ENCODE measurements at regions of chr2 and their contacts with region 1.

Region 1: GRCh38 chr2:237674731-237675276 is 47.4 kb downstream of the LRRFIP1 start:
- DNase-seq: peak; percentile 52 to 94 (median 88)
- ATAC-seq: peak; percentile 64 to 76 (median 68)
- H3K4me3 ChIP-seq: peak overlapping the region; percentile 58 to 76
- H3K4me3 Mint-ChIP-seq: peak overlapping the region; percentile 81 to 86 (median 82)
- H3K27ac ChIP-seq: peak overlapping the region; percentile 99
- H3K27ac Mint-ChIP-seq: peak overlapping the region; percentile 93 to 98
- H3K4me1 ChIP-seq: peaks cover 45 to 48% of the 10 kb centered on the region in 2 experiments
- H3K4me1 Mint-ChIP-seq: peaks cover 48 to 66% (median 50%) of the 10 kb centered on the region in 3 donors
- H3K27me3 ChIP-seq: peaks cover 0 to 7% of the 10 kb centered on the region in 2 experiments
- H3K27me3 Mint-ChIP-seq: no peaks in the 10 kb centered on the region

Region 2: GRCh38 chr2:237686659-237687136 is 11.9 kb after region 1 on chr2:
- CTCF ChIA-PET with region 1: interaction called, 3 to 112 read pairs
- POLR2A ChIA-PET with region 1: interaction called, 43 to 152 read pairs
- DNase-seq: no peak
- ATAC-seq: no peak
- H3K4me3 ChIP-seq: no peak overlapping the region
- H3K4me3 Mint-ChIP-seq: peak overlapping the region in 1 of 3 donors; percentile 28
- H3K27ac ChIP-seq: peak overlapping the region; percentile 96
- H3K27ac Mint-ChIP-seq: peak overlapping the region; percentile 99 to 100
- H3K4me1 ChIP-seq: peaks cover 33 to 52% of the 10 kb centered on the region in 2 experiments
- H3K4me1 Mint-ChIP-seq: peaks cover 53 to 60% (median 54%) of the 10 kb centered on the region in 3 donors
- H3K27me3 ChIP-seq: no peaks in the 10 kb centered on the region
- H3K27me3 Mint-ChIP-seq: no peaks in the 10 kb centered on the region

Region 3: GRCh38 chr2:237691908-237692600 is 17.2 kb after region 1 on chr2:
- CTCF ChIA-PET with region 1: interaction called, 9 to 112 read pairs
- POLR2A ChIA-PET with region 1: interaction called, 43 to 152 read pairs
- DNase-seq: peak; percentile 85 to 98 (median 91)
- ATAC-seq: peak; percentile 66 to 77 (median 76)
- H3K4me3 ChIP-seq: peak overlapping the region; percentile 82 to 93
- H3K4me3 Mint-ChIP-seq: peak overlapping the region; percentile 84 to 89 (median 87)
- H3K27ac ChIP-seq: peak overlapping the region; percentile 95
- H3K27ac Mint-ChIP-seq: peak overlapping the region; percentile 93 to 97
- H3K4me1 ChIP-seq: peaks cover 46 to 77% of the 10 kb centered on the region in 2 experiments
- H3K4me1 Mint-ChIP-seq: peaks cover 77 to 82% (median 80%) of the 10 kb centered on the region in 3 donors
- H3K27me3 ChIP-seq: no peaks in the 10 kb centered on the region
- H3K27me3 Mint-ChIP-seq: no peaks in the 10 kb centered on the region

Region 4: DNA sequence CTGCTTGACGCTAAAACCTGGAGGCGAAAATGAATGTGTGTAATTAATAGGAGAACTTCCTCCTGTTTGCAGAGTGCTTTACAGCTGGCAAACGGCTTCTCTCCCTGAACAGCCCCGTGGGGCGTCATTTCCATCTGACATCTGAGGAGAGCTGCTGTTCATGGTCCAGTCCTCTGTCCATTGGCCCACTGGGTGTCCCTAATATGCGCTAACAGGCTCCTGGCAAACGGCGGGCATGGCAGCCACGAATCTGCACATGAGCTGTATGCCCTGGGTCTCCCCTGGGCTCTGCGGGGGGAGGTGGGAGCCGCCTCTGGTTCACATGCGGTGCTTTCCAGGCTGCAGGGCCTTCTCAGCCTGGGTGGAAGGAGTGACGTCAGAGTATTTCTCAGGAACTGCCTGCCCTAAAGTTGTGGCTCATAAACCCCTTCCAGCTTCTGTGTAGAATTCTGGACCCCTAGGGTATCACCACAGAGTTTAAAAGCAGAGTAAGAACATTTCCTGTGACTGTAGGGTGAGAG is 25.8 kb after region 1 on chr2:
- CTCF ChIA-PET with region 1: interaction called, 9 to 112 read pairs
- POLR2A ChIA-PET with region 1: interaction called, 13 to 122 read pairs
- DNase-seq: peak in 31 of 35 experiments; percentile 59 to 87 (median 72)
- ATAC-seq: peak; percentile 18 to 81 (median 36)
- H3K4me3 ChIP-seq: peak overlapping the region in 1 of 2 donors; percentile 25
- H3K4me3 Mint-ChIP-seq: peak overlapping the region; percentile 44 to 77 (median 59)
- H3K27ac ChIP-seq: peak overlapping the region; percentile 82
- H3K27ac Mint-ChIP-seq: peak overlapping the region; percentile 89 to 96
- H3K4me1 ChIP-seq: peaks cover 74 to 96% of the 10 kb centered on the region in 2 experiments
- H3K4me1 Mint-ChIP-seq: peaks cover 96 to 98% (median 96%) of the 10 kb centered on the region in 3 donors
- H3K27me3 ChIP-seq: no peaks in the 10 kb centered on the region
- H3K27me3 Mint-ChIP-seq: no peaks in the 10 kb centered on the region

Region 5: GRCh38 chr2:237708065-237708398 is 33.2 kb after region 1 on chr2:
- CTCF ChIA-PET with region 1: interaction called, 5 to 17 read pairs
- POLR2A ChIA-PET with region 1: interaction called, 4 to 6 read pairs
- DNase-seq: peak in 1 of 35 experiments; percentile 42
- ATAC-seq: no peak
- H3K4me3 ChIP-seq: no peak overlapping the region
- H3K4me3 Mint-ChIP-seq: peak overlapping the region in 1 of 3 donors; percentile 39
- H3K27ac ChIP-seq: peak overlapping the region; percentile 6
- H3K27ac Mint-ChIP-seq: peak overlapping the region in 1 of 2 donors; percentile 25
- H3K4me1 ChIP-seq: peaks cover 13 to 63% of the 10 kb centered on the region in 2 experiments
- H3K4me1 Mint-ChIP-seq: peaks cover 69 to 77% (median 75%) of the 10 kb centered on the region in 3 donors
- H3K27me3 ChIP-seq: no peaks in the 10 kb centered on the region
- H3K27me3 Mint-ChIP-seq: no peaks in the 10 kb centered on the region

Measured in T-cell (primary cell).